ENCODE measurements at regions of chr17 and their contacts with region 1.

Region 1: DNA sequence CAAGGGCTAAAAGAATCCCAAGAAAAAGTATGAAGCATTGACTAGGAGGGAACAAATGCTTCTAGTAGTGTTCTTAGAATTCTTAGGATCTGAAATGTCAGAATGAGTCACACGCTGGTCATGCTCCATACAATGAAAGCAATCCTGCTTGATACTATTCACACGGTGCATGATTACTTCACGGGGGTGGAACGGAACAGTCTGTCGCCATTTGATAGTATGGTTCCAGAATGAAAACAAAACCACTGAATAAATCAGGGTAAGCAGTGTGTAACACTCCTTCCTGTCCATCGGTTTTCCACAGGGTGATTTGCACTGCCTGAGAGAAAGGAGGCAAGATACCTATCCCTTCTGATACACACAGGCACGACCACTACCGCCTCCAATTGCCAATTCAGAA is 22.9 kb upstream of the YWHAE start:
- DNase-seq: peak; percentile 64 to 72
- H3K4me3 ChIP-seq: no peak overlapping the region
- H3K27ac ChIP-seq: peak overlapping the region; percentile 58
- H3K4me1 ChIP-seq: peaks cover 10% of the 10 kb centered on the region
- H3K27me3 ChIP-seq: no peaks in the 10 kb centered on the region
- CTCF ChIP-seq: no peak

Region 2: DNA sequence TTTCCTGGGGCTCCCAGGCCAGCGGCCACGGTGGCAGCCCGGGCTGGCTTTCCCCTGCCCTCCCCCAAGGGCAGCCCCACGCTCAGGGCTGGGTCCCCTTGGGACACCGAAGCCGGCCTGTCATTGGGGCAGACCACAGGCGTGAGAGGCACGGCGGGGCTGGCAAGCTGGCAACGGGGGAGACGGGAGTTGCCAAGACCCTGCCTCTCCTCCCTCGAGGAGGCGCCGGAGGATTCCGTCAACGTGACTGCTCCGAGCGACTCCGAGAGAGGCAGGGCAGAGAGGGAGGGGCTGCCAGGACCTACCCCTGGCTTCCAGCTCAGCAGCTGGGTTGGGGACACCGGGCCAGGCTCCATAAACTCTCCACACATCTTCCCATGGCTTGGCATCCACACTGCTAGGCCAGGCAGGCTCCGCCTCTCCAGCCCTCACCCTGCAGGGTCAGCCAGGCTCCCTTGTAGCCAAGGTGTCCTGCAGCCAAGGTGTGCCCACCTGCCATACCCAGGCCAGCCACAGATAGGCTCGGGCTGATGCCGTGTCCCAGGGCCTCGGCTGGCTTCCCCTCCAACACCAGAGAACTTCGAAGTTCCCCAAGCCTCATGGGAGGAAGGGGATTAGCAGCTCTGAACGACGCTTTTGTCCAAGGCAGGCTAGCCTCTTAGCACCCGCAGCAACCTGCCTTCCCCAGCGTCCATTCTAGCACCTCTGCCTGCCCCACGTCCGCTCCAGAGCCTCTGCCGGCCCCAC is 400.5 kb before region 1 on chr17:
- CTCF ChIA-PET with region 1: no interaction called
- POLR2A ChIA-PET with region 1: no interaction called
- intact Hi-C with region 1: no loop called
- DNase-seq: no peak
- H3K4me3 ChIP-seq: no peak overlapping the region
- H3K27ac ChIP-seq: no peak overlapping the region
- H3K4me1 ChIP-seq: no peaks in the 10 kb centered on the region
- H3K27me3 ChIP-seq: no peaks in the 10 kb centered on the region
- CTCF ChIP-seq: no peak

Region 3: GRCh38 chr17:1260086-1260769 is 162.7 kb before region 1 on chr17:
- CTCF ChIA-PET with region 1: no interaction called
- POLR2A ChIA-PET with region 1: no interaction called
- intact Hi-C with region 1: no loop called
- DNase-seq: no peak
- H3K4me3 ChIP-seq: peak overlapping the region; percentile 58; the same call in 1 of the 2 replicates
- H3K27ac ChIP-seq: no peak overlapping the region
- H3K4me1 ChIP-seq: peaks cover 10% of the 10 kb centered on the region; the same call in 1 of the 2 replicates
- H3K27me3 ChIP-seq: peaks cover 5% of the 10 kb centered on the region; the same call in 1 of the 2 replicates
- CTCF ChIP-seq: no peak

Region 4: DNA sequence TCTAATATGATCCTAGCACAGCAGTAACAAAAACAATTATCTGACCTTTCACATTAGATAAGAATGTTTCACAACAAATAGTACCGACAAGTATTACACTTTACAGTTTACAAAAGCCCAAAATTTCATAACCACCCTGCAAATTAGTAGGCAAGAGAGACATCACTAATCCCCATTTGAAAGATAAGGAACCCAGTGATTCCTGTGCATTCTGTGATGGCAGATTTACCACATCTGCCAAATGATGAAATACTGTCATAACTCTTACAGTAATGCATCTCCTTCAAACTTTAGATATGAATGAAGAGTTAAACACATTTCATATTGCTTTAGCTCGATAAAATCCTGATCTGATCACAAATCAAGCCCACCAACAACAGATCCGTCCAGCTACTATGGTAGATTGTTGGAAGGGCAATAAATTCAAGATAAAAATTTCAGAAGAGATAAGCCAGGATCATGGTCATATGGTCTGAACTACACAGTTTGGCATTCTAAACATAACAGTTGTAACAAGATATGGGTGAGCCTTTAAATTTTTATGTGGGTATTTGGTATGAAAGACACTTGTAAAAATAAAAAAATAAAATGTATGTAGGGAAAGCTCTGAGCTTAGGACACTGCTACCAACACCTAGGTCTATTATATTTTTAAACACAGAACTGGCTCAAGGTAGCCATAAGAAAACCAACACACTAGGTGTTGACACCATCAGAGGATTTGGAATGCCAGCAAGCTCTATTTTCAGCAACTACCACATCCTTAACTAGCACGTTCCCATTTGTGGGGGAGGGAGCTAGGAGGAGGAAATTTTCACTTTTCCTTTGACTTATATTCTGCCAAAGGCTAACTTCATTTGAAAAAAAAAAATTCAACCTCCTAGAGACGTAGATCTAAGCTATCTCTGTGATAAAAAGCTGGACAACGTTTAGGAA is 32.2 kb before region 1 on chr17:
- CTCF ChIA-PET with region 1: no interaction called
- POLR2A ChIA-PET with region 1: interaction called, 13 read pairs
- intact Hi-C with region 1: loop called (anchors 2 kb)
- DNase-seq: no peak
- H3K4me3 ChIP-seq: no peak overlapping the region
- H3K27ac ChIP-seq: peak overlapping the region; percentile 0
- H3K4me1 ChIP-seq: peaks cover 60% of the 10 kb centered on the region
- H3K27me3 ChIP-seq: no peaks in the 10 kb centered on the region
- CTCF ChIP-seq: no peak

Region 5: GRCh38 chr17:1490643-1491442 is 67.9 kb after region 1 on chr17:
- CTCF ChIA-PET with region 1: no interaction called
- POLR2A ChIA-PET with region 1: no interaction called
- intact Hi-C with region 1: no loop called
- DNase-seq: peak; percentile 48 to 76
- H3K4me3 ChIP-seq: peak overlapping the region; percentile 93
- H3K27ac ChIP-seq: no peak overlapping the region
- H3K4me1 ChIP-seq: peaks cover 48% of the 10 kb centered on the region
- H3K27me3 ChIP-seq: no peaks in the 10 kb centered on the region
- CTCF ChIP-seq: no peak

Region 6: GRCh38 chr17:1783834-1784611 is 361.1 kb after region 1 on chr17:
- CTCF ChIA-PET with region 1: no interaction called
- POLR2A ChIA-PET with region 1: no interaction called
- intact Hi-C with region 1: no loop called
- DNase-seq: no peak
- H3K4me3 ChIP-seq: no peak overlapping the region
- H3K27ac ChIP-seq: no peak overlapping the region
- H3K4me1 ChIP-seq: peaks cover 10% of the 10 kb centered on the region
- H3K27me3 ChIP-seq: no peaks in the 10 kb centered on the region
- CTCF ChIP-seq: peak; percentile 79

Measured in PC-9 (cell line).